ENCODE measurements at regions of chr2 and their contacts with region 1.

Region 1: DNA sequence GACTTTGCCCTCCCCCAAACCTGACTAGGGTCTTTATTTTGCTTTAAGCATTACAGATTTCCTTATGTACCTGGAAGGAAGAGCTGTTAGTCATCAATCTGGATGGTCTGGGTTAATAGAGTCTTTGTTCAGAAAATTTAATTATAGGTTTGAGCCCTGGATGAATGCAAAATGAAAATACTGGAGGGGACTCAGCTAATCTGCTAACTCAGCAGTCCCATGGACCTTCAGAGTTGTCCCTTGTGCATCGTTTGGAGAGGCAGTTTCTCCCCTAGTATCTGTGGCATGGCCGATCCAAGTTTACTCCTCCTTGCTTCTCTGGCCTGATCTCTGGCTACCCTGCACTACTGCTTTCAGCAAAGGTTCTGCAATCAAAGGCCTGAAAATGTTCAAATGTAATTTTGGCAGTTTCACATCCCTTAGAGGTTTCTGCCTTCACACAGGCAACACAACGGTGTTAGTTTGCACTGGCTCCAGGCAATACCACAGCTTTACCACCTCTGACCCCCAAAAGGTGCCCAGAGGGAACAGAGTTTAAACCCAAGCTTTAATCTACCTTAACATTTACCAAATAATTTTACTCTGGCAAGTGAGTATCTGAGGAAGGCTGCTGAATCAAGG is 134.3 kb downstream of the THADA start:
- DNase-seq: no peak
- ATAC-seq: no peak
- H3K4me3 ChIP-seq: no peak overlapping the region
- H3K27ac ChIP-seq: no peak overlapping the region
- H3K4me1 ChIP-seq: peaks cover 22% of the 10 kb centered on the region
- H3K27me3 ChIP-seq: no peaks in the 10 kb centered on the region
- CTCF ChIP-seq: no peak
- POLR2A ChIP-seq: no peak
- RAD21 ChIP-seq: no peak

Region 2: DNA sequence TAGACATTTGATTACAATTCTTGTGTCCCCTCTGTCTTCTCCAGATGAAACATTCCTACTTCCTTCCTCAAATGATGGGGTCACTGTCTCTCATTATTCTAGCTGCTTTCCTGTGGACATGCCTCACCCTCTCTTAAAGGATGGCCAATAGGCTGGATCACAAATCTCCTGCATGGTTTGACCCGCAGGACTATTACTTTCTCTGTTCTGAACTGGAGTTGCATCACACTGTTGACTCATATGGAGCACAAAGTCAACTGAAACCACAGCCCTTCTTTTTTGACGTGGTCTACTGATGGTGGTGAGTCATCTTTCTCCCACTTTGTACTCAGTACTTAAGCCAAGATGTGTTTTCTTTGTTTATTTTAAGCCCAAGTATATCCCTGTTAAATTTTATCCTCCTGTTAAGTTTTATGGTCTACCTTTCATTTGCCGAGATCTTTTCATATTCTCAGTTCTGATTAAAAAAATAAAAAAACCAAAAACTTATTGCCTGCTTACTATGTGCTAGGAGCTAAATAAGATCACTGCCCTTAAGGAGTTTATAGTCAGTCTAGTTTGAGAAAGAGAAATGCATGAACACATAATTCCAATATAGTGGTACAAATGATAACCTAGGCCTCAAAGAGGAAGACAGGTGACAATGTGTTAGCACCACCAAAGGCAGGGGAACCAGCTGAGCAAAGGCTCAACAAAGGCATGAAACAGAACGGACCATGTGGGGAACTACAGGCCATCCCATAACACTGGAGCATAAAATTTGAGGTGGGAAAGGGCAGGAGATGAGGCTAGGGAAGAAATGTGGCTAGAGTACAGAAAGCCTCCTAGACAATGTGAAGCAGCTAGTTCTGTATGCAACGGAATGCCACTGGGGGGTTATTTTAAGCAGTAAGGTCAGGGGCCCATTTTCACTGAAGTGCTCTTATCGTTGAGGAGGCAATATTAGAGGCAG is 167.5 kb before region 1 on chr2:
- CTCF ChIA-PET with region 1: no interaction called
- POLR2A ChIA-PET with region 1: interaction called, 11 read pairs
- dilution Hi-C with region 1: no loop called
- in situ Hi-C with region 1: no loop called
- intact Hi-C with region 1: no loop called
- DNase-seq: peak; percentile 100
- ATAC-seq: peak; percentile 93
- H3K4me3 ChIP-seq: no peak overlapping the region
- H3K27ac ChIP-seq: peak overlapping the region; percentile 44; the same call in 1 of the 2 replicates
- H3K4me1 ChIP-seq: peaks cover 7% of the 10 kb centered on the region
- H3K27me3 ChIP-seq: no peaks in the 10 kb centered on the region
- CTCF ChIP-seq: no peak
- POLR2A ChIP-seq: no peak
- RAD21 ChIP-seq: no peak

Region 3: DNA sequence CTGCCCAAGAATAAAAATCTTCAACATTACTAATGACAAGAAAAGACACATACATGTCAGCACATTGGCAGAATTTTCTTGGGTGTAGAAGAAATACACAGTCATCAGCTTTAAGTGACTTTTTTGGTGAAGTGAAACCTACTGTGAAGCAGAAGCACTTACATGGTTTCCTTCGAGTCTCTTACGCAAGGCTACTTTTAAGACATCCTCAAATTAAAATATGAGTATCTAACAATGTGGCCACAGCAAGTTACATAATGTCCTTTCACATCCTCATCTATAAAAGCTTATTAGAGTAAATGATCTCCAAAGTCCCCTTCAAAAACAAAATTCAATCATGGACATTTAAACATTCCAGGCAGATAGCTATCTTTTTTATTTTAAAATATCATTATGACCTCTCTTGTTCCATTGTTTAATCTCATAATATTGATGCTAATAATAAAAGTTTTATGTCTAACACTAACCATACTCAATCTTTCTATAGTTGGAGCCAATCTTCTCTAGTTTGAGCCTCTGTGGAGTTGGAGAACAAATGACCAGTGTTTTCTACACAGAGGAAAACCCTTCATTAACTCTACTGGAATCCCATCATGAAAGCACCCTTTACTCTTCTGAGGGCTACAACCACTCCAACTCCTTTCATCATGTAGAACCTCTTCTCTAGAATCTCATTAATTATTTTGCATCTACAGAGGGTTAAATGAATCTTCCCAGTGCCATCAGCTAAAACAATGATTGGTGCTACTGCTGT is 53.0 kb before region 1 on chr2:
- CTCF ChIA-PET with region 1: no interaction called
- POLR2A ChIA-PET with region 1: no interaction called
- dilution Hi-C with region 1: no loop called
- in situ Hi-C with region 1: no loop called
- intact Hi-C with region 1: no loop called
- DNase-seq: no peak
- ATAC-seq: peak; percentile 10; the same call in 1 of the 2 replicates
- H3K4me3 ChIP-seq: no peak overlapping the region
- H3K27ac ChIP-seq: no peak overlapping the region
- H3K4me1 ChIP-seq: peaks cover 6% of the 10 kb centered on the region
- H3K27me3 ChIP-seq: 0 out of 2 replicates have a peak, but pooled peaks cover 2% of the 10 kb centered on the region
- CTCF ChIP-seq: no peak
- POLR2A ChIP-seq: no peak
- RAD21 ChIP-seq: no peak

Region 4: DNA sequence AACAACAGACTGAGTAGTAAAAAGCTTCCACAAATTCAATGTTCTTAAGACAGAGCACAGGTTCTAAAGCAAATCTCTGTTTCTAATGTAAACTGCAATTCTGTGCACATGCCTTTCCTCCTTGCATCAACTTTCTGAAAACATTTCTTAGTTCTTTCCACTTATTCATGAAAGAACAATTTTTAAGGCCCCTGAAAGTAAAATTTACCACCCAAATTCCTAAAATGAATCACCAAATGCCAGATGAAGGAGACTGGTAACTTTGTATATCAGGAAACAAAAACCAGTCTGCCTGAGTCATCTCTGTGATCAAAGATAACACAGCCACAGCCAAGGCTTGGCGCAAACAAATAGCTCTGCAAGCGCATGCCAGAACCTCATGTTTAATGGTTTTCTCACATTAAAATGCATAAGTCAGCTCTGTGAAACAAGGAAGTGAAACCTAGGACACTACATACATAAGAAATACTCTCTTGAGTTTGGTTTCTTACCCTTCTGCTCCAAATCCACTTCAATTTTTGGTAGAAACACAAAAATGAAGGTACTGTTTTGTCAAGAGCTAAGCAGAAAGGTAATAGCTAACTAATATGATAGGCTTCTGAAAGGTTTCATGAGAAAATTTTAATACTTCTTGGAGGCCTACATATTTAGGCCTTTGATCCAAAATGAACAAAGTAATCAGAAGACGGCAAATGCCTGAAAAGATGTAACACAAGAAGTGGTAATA is 35.1 kb before region 1 on chr2:
- CTCF ChIA-PET with region 1: no interaction called
- POLR2A ChIA-PET with region 1: no interaction called
- dilution Hi-C with region 1: no loop called
- in situ Hi-C with region 1: no loop called
- intact Hi-C with region 1: loop called (anchors 5 kb)
- DNase-seq: peak; percentile 98
- ATAC-seq: peak; percentile 97
- H3K4me3 ChIP-seq: no peak overlapping the region
- H3K27ac ChIP-seq: peak overlapping the region; percentile 14; the same call in 1 of the 2 replicates
- H3K4me1 ChIP-seq: peaks cover 5% of the 10 kb centered on the region
- H3K27me3 ChIP-seq: no peaks in the 10 kb centered on the region; the same call in 1 of the 2 replicates
- CTCF ChIP-seq: no peak
- POLR2A ChIP-seq: no peak
- RAD21 ChIP-seq: no peak